ENCODE measurements at regions of chr1 and their contacts with region 1.

Region 1: GRCh38 chr1:45686317-45687013 is at the start of gene GPBP1L1:
- DNase-seq: peak; percentile 97
- H3K4me3 ChIP-seq: peak within 1 kb of the TSS; percentile 62 to 99 (median 93)
- H3K27ac ChIP-seq: peak within 1 kb of the TSS; percentile 80
- H3K4me1 ChIP-seq: peaks cover 22% of the 10 kb centered on the region
- H3K27me3 ChIP-seq: no peaks in the 10 kb centered on the region
- CTCF ChIP-seq: no peak
- POLR2A ChIP-seq: peak; percentile 90
- total RNA-seq, gene GPBP1L1: 88.8 and 89.7 TPM in 2 replicates

Region 2: GRCh38 chr1:45216200-45216541 is 470.3 kb before region 1 on chr1:
- CTCF ChIA-PET with region 1: no interaction called
- POLR2A ChIA-PET with region 1: no interaction called
- dilution Hi-C with region 1: no loop called
- intact Hi-C with region 1: no loop called
- DNase-seq: no peak
- H3K4me3 ChIP-seq: no peak overlapping the region
- H3K27ac ChIP-seq: no peak overlapping the region
- H3K4me1 ChIP-seq: no peaks in the 10 kb centered on the region
- H3K27me3 ChIP-seq: peaks cover 0 to 2% of the 10 kb centered on the region in 2 experiments
- CTCF ChIP-seq: no peak
- POLR2A ChIP-seq: no peak

Region 3: GRCh38 chr1:45339789-45340570 is 346.5 kb before region 1 on chr1 and contains the starts of genes MUTYH and TOE1:
- CTCF ChIA-PET with region 1: no interaction called
- POLR2A ChIA-PET with region 1: no interaction called
- dilution Hi-C with region 1: no loop called
- intact Hi-C with region 1: loop called (anchors 5 kb)
- DNase-seq: peak; percentile 94
- H3K4me3 ChIP-seq: peak within 1 kb of the TSS; percentile 48 to 82 (median 56)
- H3K27ac ChIP-seq: peak within 1 kb of the TSS; percentile 85
- H3K4me1 ChIP-seq: peaks cover 22% of the 10 kb centered on the region
- H3K27me3 ChIP-seq: no peaks in the 10 kb centered on the region
- CTCF ChIP-seq: no peak
- POLR2A ChIP-seq: peak; percentile 72
- total RNA-seq, gene MUTYH: 14.3 and 16.6 TPM in 2 replicates
- total RNA-seq, gene TOE1: 15.8 and 16.3 TPM in 2 replicates

Region 4: GRCh38 chr1:45583264-45583665 is 103.2 kb before region 1 on chr1:
- CTCF ChIA-PET with region 1: interaction called, 3 read pairs
- POLR2A ChIA-PET with region 1: interaction called, 6 read pairs
- dilution Hi-C with region 1: no loop called
- intact Hi-C with region 1: loop called (anchors 1 kb)
- DNase-seq: peak; percentile 99
- H3K4me3 ChIP-seq: peak overlapping the region; percentile 62 to 81 (median 67)
- H3K27ac ChIP-seq: peak overlapping the region; percentile 78
- H3K4me1 ChIP-seq: peaks cover 17% of the 10 kb centered on the region
- H3K27me3 ChIP-seq: no peaks in the 10 kb centered on the region
- CTCF ChIP-seq: no peak
- POLR2A ChIP-seq: no peak

Region 5: GRCh38 chr1:45594412-45594811 is 92.1 kb before region 1 on chr1:
- CTCF ChIA-PET with region 1: no interaction called
- POLR2A ChIA-PET with region 1: no interaction called
- dilution Hi-C with region 1: no loop called
- intact Hi-C with region 1: no loop called
- DNase-seq: no peak
- H3K4me3 ChIP-seq: no peak overlapping the region
- H3K27ac ChIP-seq: no peak overlapping the region
- H3K4me1 ChIP-seq: no peaks in the 10 kb centered on the region
- H3K27me3 ChIP-seq: no peaks in the 10 kb centered on the region
- CTCF ChIP-seq: no peak
- POLR2A ChIP-seq: no peak

Region 6: DNA sequence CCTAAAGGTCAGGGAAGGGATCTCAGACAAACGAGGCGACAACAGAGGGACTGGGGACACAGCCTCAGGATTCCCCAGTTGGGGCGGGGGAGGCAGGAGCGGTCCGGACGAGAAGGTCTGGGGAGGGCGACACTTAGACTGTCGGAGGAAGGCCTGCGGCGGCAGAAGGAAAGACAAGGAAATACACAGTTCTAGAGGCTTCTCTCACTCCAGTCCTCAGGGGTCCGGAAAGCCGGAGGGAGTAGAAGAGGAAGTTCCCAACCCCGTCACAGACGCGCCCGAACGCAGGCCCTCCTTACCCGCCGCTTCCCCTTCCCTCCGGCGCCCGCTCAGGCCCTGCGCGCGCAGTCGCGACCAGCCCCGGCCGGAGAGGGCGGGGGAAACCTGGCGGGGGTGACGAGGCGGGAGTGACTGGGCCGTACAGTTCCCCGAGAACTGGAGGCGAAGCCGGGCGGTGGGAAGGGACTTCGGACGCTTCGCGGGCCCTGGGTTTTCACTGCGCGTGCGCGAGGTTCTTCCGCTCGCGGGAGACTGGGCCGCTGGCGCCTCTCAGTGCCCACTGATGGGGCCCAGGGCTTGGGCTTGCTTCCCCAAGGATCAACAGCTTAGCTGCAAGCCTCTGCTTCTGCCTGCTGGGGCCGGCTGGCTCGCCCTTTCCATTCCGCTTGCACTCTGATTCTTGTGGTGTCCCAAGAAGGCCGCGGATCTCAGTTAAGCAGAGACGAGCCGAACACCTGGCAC is 64.0 kb after region 1 on chr1 and contains the start of gene IPP:
- CTCF ChIA-PET with region 1: interaction called, 3 read pairs
- POLR2A ChIA-PET with region 1: interaction called, 3 read pairs
- dilution Hi-C with region 1: no loop called
- intact Hi-C with region 1: loop called (anchors 1 kb)
- DNase-seq: peak; percentile 99
- H3K4me3 ChIP-seq: peak within 1 kb of the TSS; percentile 65 to 83 (median 81)
- H3K27ac ChIP-seq: peak within 1 kb of the TSS; percentile 97
- H3K4me1 ChIP-seq: peaks cover 8% of the 10 kb centered on the region
- H3K27me3 ChIP-seq: no peaks in the 10 kb centered on the region
- CTCF ChIP-seq: peak in 1 of 2 donors; percentile 11
- POLR2A ChIP-seq: peak; percentile 98
- total RNA-seq, gene IPP: 6.3 and 7.2 TPM in 2 replicates

Region 7: DNA sequence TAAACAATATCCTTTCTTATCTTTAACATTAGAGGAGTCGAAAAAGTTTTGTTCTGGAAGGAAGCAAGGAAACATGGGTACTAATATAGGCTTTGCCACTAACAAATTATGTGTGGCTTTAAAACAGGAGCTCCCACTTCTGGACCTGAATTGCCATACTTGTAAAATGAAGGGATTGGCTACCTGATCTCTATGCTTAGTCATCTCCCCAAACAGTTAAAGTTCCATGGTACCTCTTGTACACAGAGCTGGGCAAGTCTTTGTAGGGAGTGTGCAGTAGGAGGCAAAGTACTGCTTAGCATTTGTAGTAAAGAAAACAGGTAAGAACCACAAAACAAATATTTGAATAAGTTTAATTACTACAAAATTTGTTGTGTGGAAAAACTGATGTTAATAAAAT is 198.2 kb after region 1 on chr1:
- CTCF ChIA-PET with region 1: interaction called, 3 read pairs
- POLR2A ChIA-PET with region 1: no interaction called
- dilution Hi-C with region 1: no loop called
- intact Hi-C with region 1: loop called (anchors 5 kb)
- DNase-seq: no peak
- H3K4me3 ChIP-seq: no peak overlapping the region
- H3K27ac ChIP-seq: no peak overlapping the region
- H3K4me1 ChIP-seq: no peaks in the 10 kb centered on the region
- H3K27me3 ChIP-seq: no peaks in the 10 kb centered on the region
- CTCF ChIP-seq: no peak
- POLR2A ChIP-seq: no peak

Region 8: DNA sequence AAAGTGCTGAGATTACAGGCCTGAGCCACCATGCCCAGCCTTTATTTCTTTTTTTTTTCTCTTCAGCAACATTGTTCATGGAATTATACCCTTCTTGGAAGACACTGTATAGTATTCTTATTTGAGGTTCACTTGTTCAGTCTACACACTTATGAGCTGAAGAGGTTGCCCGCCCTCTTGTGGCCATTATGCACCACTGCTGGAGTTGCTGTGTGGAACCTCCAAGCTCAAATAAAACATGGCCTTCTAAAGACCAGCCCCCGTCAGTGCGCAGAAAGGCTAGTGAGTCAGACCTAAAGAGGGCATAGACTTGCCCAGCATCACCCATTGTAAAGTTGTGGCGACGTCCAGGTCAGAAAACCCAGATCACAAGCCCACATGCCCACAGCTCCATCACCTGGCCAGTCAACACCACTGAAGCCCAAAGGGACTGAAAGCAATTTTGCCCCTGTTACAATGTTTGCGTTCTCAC is 537.0 kb after region 1 on chr1:
- CTCF ChIA-PET with region 1: interaction called, 3 read pairs
- POLR2A ChIA-PET with region 1: no interaction called
- dilution Hi-C with region 1: no loop called
- intact Hi-C with region 1: loop called (anchors 10 kb)
- DNase-seq: peak; percentile 87
- H3K4me3 ChIP-seq: no peak overlapping the region
- H3K27ac ChIP-seq: no peak overlapping the region
- H3K4me1 ChIP-seq: peaks cover 2% of the 10 kb centered on the region
- H3K27me3 ChIP-seq: no peaks in the 10 kb centered on the region
- CTCF ChIP-seq: peak; percentile 88 to 98
- POLR2A ChIP-seq: no peak